ENCODE measurements at regions of chr3 and their contacts with region 1.

Region 1: GRCh38 chr3:12901623-12902045 is 60.3 kb upstream of the RPL32 start:
- DNase-seq: peak; percentile 74
- H3K4me3 ChIP-seq: no peak overlapping the region
- H3K27ac ChIP-seq: peak overlapping the region in 3 of 8 donors; percentile 4 to 51 (median 11)
- H3K4me1 ChIP-seq: peaks cover 5 to 62% (median 39%) of the 10 kb centered on the region in 6 donors
- H3K27me3 ChIP-seq: no peaks in the 10 kb centered on the region
- CTCF ChIP-seq: peak in 2 of 11 experiments; percentile 13 to 25
- POLR2A ChIP-seq: no peak

Region 2: DNA sequence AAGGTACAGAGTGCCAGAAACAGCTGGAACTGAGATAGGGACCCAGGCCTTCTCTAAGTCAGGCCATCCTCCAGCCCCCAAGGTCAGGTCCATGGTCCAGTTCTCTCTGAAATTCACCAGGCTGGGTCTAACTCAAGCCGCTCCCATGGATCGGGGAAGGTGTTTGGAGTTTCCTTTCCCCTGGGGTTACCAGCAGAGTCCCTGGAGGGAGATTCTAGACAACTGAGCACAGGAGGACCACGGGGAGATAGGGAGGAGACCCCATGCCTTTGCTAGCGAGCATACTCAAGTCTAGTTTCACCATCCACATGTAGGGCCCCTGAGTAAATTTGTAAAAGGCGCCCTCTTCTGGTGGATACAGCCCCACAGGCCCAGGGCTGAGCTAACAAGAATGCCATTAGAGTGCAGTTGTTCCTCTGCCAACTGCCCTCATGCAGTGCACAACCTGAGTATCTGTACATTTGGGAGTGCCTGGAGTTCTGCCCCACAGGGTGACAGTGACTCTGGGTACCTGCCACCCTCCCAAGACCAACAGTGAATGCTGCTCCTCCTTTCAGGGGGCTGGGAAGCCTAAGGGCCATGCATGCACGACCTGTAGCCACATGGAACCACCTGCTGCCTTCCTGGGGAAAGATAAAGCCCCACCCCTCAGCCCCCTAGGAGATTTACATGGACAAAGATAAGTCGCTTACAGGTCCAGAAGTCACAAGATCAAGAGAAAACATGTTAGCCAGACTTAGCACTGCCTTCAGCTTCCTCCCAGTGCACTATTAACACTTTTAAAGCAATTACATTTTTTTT is 82.6 kb after region 1 on chr3:
- intact Hi-C with region 1: loop called (anchors 10 kb)
- DNase-seq: no peak
- H3K4me3 ChIP-seq: no peak overlapping the region
- H3K27ac ChIP-seq: peak overlapping the region in 1 of 8 donors; percentile 63
- H3K4me1 ChIP-seq: peaks cover 20 to 98% (median 70%) of the 10 kb centered on the region in 6 donors
- H3K27me3 ChIP-seq: no peaks in the 10 kb centered on the region
- CTCF ChIP-seq: peak; percentile 57 to 90 (median 74)
- POLR2A ChIP-seq: no peak

Region 3: GRCh38 chr3:13012228-13012691 is 110.6 kb after region 1 on chr3:
- intact Hi-C with region 1: no loop called
- DNase-seq: peak; percentile 94
- H3K4me3 ChIP-seq: peak overlapping the region in 1 of 8 donors; percentile 69
- H3K27ac ChIP-seq: peak overlapping the region; percentile 29 to 99 (median 97)
- H3K4me1 ChIP-seq: peaks cover 82 to 100% (median 100%) of the 10 kb centered on the region in 6 donors
- H3K27me3 ChIP-seq: no peaks in the 10 kb centered on the region
- CTCF ChIP-seq: peak in 1 of 11 experiments; percentile 13
- POLR2A ChIP-seq: no peak

Region 4: GRCh38 chr3:13451301-13451673 is 549.7 kb after region 1 on chr3:
- intact Hi-C with region 1: no loop called
- DNase-seq: no peak
- H3K4me3 ChIP-seq: peak overlapping the region; percentile 42 to 73 (median 48)
- H3K27ac ChIP-seq: peak overlapping the region in 7 of 8 donors; percentile 49 to 89 (median 85)
- H3K4me1 ChIP-seq: peaks cover 7 to 22% (median 17%) of the 10 kb centered on the region in 6 donors
- H3K27me3 ChIP-seq: no peaks in the 10 kb centered on the region
- CTCF ChIP-seq: no peak
- POLR2A ChIP-seq: no peak

Measured in spleen (tissue), 13 donors.